Dendritic cell treated with granulocyte-macrophage colony-stimulating factor and Interleukin-4, amounts not matched to agents 40 ng/mL and 50 ng/mL, for 4 days (primary cell): ENCODE measurements at regions of chr11 and their contacts with region 1.

Region 1: DNA sequence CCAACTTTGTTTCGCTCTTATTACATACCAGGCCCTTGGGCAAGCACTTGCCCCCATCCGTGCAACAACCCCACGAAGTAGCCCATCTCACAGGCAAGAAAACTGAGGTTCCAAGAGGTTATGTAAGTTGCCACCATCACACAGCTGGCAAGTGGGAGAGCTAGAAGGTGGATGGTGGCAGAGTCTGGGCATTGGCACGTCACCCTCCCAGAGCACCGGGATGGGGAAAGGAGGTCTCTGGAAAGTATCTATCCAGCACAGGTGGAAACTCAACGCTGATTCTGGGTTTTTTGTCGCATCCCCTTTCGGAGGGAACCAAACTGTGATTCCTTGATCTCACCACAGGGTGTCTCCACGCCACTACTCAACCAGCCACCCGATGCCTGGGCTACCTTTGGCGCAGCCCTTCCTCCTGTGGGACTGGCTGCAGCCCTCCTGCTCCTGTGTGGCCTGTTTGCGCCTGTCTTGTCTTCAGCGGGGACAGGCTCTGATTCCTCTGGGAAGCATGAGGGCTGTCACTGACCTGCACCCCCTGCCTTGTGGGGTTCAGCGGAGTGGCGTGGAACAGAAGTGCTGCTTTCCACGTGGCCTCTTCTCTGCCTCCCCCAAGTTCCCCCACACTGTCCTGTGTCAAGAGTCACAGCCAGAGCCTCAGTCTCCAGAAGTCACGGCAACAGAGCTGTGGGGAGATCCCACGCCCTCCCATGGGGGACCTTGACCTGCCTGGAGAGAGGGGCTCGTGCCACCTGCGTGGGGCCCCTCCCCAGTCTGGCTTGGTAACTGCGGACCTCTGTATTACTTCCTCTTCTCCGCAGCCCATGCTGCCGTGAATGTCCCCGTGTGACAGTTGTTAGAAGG is 34.4 kb upstream of the TRIM29 start:
- H3K4me3 Mint-ChIP-seq: no peak overlapping the region
- H3K27ac Mint-ChIP-seq: no peak overlapping the region
- H3K4me1 Mint-ChIP-seq: peaks cover 40% of the 10 kb centered on the region
- H3K27me3 Mint-ChIP-seq: peaks cover 82% of the 10 kb centered on the region

Region 2: DNA sequence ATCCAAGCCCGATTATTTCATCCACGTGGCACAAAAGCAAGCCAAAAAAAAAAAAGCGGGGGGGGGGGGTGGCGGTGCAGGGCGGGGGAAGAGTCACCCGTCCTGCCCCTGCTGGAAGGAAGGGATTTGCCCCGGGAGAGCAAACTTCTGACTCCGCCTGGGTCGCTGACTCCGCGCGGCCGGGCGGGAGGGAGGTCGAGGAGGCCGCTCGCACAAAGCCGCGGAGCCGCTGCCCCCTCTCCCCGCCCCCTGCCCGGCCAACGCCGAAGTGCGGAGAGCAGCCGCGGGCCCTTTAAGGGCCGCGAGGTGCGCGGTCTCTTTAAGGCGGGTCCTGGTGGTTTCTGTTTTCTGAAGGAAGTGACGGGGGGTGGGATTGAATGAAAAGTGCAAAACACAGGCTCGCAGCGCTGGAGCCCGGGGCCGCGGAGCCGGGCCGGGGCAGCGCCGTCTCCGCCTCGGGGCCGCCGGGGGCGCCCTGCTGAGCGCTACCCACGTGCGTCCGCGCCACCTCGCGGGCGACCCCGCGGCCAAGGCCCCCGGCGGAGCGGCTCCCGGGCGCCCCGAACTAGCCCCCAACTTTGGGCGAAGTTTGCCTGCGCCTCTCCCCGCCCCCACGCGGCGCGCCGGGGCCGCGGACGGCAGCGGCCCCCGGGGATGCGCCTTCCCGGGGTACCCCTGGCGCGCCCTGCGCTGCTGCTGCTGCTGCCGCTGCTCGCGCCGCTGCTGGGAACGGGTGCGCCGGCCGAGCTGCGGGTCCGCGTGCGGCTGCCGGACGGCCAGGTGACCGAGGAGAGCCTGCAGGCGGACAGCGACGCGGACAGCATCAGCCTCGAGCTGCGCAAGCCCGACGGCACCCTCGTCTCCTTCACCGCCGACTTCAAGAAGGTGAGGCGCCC is 38.6 kb after region 1 on chr11 and contains the start of gene OAF:
- intact Hi-C with region 1: loop called (anchors 5 kb)
- H3K4me3 Mint-ChIP-seq: peak within 1 kb of the TSS; percentile 94
- H3K27ac Mint-ChIP-seq: peak within 1 kb of the TSS; percentile 84
- H3K4me1 Mint-ChIP-seq: peaks cover 65% of the 10 kb centered on the region
- H3K27me3 Mint-ChIP-seq: peaks cover 23% of the 10 kb centered on the region

Region 3: GRCh38 chr11:120229451-120230424 is 57.5 kb after region 1 on chr11:
- intact Hi-C with region 1: loop called (anchors 1 kb)
- H3K4me3 Mint-ChIP-seq: no peak overlapping the region
- H3K27ac Mint-ChIP-seq: no peak overlapping the region
- H3K4me1 Mint-ChIP-seq: peaks cover 39% of the 10 kb centered on the region
- H3K27me3 Mint-ChIP-seq: peaks cover 37% of the 10 kb centered on the region

Region 4: GRCh38 chr11:120303004-120303637 is 130.8 kb after region 1 on chr11:
- intact Hi-C with region 1: loop called (anchors 1 kb)
- H3K4me3 Mint-ChIP-seq: no peak overlapping the region
- H3K27ac Mint-ChIP-seq: no peak overlapping the region
- H3K4me1 Mint-ChIP-seq: peaks cover 10% of the 10 kb centered on the region
- H3K27me3 Mint-ChIP-seq: peaks cover 62% of the 10 kb centered on the region